ENCODE measurements at regions of chr1 and their contacts with region 1.

Region 1: DNA sequence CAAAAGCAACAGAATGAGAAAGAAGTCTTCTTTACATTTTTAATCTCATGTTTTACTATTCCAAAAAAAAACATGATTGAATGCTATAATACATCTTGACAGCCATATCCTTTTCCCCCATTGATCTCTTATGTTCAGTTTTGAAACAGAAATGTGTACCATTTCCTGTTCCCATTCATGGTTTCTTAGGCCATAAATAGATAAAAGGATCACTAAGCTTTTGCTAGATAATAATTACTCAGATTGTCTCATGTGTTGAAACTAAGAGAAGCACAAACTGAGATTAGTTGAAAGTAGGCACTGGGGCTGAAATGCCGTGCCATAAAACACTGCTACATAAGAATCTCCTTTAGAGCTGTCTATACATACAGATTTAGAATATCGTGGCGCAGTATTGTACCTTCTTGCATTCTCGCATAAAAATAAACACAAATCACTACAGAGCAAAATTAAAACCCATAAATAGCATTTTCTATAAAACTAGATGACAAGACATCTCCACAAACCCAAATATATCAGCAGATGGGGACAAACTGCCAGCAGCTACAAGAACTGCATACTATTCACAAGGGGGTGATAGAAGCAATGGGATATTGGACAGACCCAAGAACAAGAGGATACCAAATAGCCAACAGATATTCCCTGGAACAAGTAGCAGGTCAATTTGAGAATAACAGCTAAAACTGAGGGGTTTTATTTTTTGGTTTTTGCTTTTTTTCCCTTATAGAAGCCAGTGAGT is 405.3 kb upstream of the PRMT6 start:
- DNase-seq: no peak
- H3K4me3 ChIP-seq: no peak overlapping the region
- H3K27ac ChIP-seq: no peak overlapping the region
- H3K4me1 ChIP-seq: no peaks in the 10 kb centered on the region
- H3K27me3 ChIP-seq: no peaks in the 10 kb centered on the region
- CTCF ChIP-seq: no peak
- EP300 ChIP-seq: no peak
- POLR2A ChIP-seq: no peak

Region 2: DNA sequence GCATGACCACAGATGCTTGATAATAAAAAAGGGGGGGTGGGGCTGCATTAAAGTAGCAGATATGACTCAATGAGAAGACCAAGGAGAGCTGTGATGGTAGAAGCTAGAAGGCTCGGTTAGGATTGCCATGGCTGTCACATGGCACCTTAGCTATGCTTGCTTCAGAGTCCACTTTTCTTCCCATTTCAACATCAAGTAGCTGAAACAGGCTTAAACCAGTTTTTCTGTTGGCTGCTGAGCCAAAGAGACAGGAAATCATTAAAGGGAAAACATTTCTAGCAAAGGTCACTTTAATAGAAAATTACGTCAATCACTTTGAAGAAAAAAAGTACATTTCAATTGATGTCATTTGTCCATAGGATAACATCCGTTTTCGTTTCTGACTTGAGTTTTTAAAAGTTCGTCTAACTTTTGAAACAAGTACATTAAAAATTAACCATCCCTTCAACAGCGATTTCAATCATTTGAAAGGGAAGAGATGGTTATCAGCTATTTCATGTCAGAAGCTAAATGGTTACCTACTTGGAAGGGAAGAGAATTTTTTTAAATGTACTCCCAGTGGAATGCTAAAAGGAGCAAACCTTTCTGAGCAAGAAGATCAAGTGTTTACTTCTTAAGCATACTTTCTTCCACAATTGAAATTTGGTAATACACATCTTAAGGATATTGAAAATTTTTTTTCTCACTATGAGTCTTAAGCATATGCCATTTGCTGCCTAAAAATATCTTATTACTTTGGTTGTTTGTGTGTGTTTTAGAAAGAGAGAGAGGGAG is 82.8 kb before region 1 on chr1:
- in situ Hi-C with region 1: loop called in 1 of 4 experiments (anchors 25 kb)
- intact Hi-C with region 1: no loop called
- DNase-seq: no peak
- H3K4me3 ChIP-seq: no peak overlapping the region
- H3K27ac ChIP-seq: no peak overlapping the region
- H3K4me1 ChIP-seq: no peaks in the 10 kb centered on the region
- H3K27me3 ChIP-seq: no peaks in the 10 kb centered on the region
- CTCF ChIP-seq: no peak
- EP300 ChIP-seq: no peak
- POLR2A ChIP-seq: no peak

Region 3: GRCh38 chr1:106768501-106768900 is 117.3 kb after region 1 on chr1:
- in situ Hi-C with region 1: no loop called
- intact Hi-C with region 1: no loop called
- DNase-seq: no peak
- H3K4me3 ChIP-seq: no peak overlapping the region
- H3K27ac ChIP-seq: no peak overlapping the region
- H3K4me1 ChIP-seq: no peaks in the 10 kb centered on the region
- H3K27me3 ChIP-seq: no peaks in the 10 kb centered on the region
- CTCF ChIP-seq: no peak
- EP300 ChIP-seq: no peak
- POLR2A ChIP-seq: no peak

Measured in transverse colon (tissue), 4 donors.